Activated CD4-positive, alpha-beta memory T cell treated with anti-CD3 and anti-CD28 coated beads for 36 hours (primary cell): ENCODE measurements at regions of chr18 and their contacts with region 1.

Region 1: DNA sequence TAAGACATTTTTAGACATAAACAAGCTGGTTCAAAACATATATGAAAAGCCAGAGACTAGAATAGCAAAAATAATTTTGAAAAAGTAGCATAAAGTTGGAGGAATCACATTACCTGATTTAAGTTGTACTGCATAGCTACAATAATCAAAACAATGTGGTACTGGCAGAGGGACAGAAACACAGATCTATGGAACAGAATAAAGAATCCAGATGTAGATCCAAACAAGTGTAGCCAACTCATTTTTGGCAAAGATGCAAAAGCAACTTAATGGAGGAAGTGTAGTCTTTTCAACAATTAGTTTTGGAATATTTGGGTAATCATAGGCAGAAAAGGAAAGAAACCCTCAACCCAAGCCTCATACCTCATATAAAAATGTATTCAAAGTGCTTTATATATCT is 278.7 kb upstream of the ZNF521 start:
- DNase-seq: no peak
- H3K4me3 Mint-ChIP-seq: no peak overlapping the region
- H3K27ac Mint-ChIP-seq: no peak overlapping the region
- H3K4me1 Mint-ChIP-seq: no peaks in the 10 kb centered on the region
- H3K27me3 Mint-ChIP-seq: no peaks in the 10 kb centered on the region

Region 2: GRCh38 chr18:25473008-25473407 is 157.7 kb before region 1 on chr18:
- CTCF ChIA-PET with region 1: no interaction called
- POLR2A ChIA-PET with region 1: no interaction called
- intact Hi-C with region 1: no loop called
- DNase-seq: no peak
- H3K4me3 Mint-ChIP-seq: no peak overlapping the region
- H3K27ac Mint-ChIP-seq: no peak overlapping the region
- H3K4me1 Mint-ChIP-seq: no peaks in the 10 kb centered on the region
- H3K27me3 Mint-ChIP-seq: no peaks in the 10 kb centered on the region

Region 3: GRCh38 chr18:25517881-25518715 is 112.6 kb before region 1 on chr18:
- CTCF ChIA-PET with region 1: no interaction called
- POLR2A ChIA-PET with region 1: no interaction called
- intact Hi-C with region 1: no loop called
- DNase-seq: no peak
- H3K4me3 Mint-ChIP-seq: no peak overlapping the region
- H3K27ac Mint-ChIP-seq: no peak overlapping the region
- H3K4me1 Mint-ChIP-seq: no peaks in the 10 kb centered on the region
- H3K27me3 Mint-ChIP-seq: no peaks in the 10 kb centered on the region

Region 4: DNA sequence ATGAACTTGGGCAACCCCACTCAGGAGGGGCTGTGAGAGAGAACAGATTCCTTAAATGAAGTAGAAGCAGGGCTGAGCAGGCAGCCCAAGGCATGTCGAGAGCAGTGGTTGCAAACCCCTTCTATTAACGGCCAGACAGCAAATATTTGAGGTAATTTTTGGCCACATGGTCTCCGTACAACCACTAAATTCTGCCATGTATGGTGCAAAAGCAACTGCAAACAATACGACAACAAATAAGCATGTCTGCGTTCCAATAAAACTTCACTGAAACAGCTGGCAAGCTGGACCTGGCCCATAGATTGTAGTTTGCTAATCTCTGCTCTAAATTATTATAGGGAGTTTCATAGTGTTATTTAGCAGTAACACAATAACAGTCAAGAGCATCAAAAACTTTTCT is 61.7 kb before region 1 on chr18:
- CTCF ChIA-PET with region 1: no interaction called
- POLR2A ChIA-PET with region 1: no interaction called
- intact Hi-C with region 1: loop called (anchors 10 kb)
- DNase-seq: no peak
- H3K4me3 Mint-ChIP-seq: no peak overlapping the region
- H3K27ac Mint-ChIP-seq: no peak overlapping the region
- H3K4me1 Mint-ChIP-seq: no peaks in the 10 kb centered on the region
- H3K27me3 Mint-ChIP-seq: no peaks in the 10 kb centered on the region